BJ (cell line): ENCODE measurements at regions of chr11 and their contacts with region 1.

Region 1: GRCh38 chr11:122248131-122248530 is 132.1 kb upstream of the BLID start:
- DNase-seq: no peak
- H3K4me3 ChIP-seq: no peak overlapping the region
- H3K27me3 ChIP-seq: no peaks in the 10 kb centered on the region
- CTCF ChIP-seq: no peak

Region 2: GRCh38 chr11:122115524-122116379 is 132.4 kb before region 1 on chr11 and contains the start of gene BLID:
- CTCF ChIA-PET with region 1: no interaction called
- POLR2A ChIA-PET with region 1: no interaction called
- DNase-seq: no peak
- H3K4me3 ChIP-seq: no peak within 1 kb of the TSS
- H3K27me3 ChIP-seq: no peaks in the 10 kb centered on the region
- CTCF ChIP-seq: peak; percentile 64
- polyA plus RNA-seq, gene BLID: 0.16 and 0.37 TPM in 2 replicates

Region 3: DNA sequence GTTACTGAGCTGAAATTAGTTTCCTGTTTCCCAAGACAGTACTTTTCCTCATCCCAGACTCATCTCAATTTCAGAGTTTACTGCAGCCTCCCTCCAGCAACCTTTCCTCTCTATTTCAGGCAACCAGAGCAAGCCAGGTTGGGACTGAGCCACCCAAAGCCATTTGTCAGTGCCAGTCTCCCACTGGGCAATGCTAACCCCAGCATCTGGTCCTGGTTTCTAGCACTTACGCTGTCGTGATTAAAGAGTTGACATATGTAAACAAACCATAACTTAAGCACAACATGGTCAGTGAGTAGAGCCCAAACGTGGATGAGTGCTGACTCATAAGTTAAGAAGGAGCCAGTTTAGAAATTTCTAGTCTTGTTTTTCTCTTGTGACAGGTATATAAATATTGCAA is 12.5 kb before region 1 on chr11:
- CTCF ChIA-PET with region 1: interaction called, 13 read pairs
- POLR2A ChIA-PET with region 1: no interaction called
- DNase-seq: peak; percentile 80
- H3K4me3 ChIP-seq: no peak overlapping the region
- H3K27me3 ChIP-seq: no peaks in the 10 kb centered on the region
- CTCF ChIP-seq: no peak

Region 4: DNA sequence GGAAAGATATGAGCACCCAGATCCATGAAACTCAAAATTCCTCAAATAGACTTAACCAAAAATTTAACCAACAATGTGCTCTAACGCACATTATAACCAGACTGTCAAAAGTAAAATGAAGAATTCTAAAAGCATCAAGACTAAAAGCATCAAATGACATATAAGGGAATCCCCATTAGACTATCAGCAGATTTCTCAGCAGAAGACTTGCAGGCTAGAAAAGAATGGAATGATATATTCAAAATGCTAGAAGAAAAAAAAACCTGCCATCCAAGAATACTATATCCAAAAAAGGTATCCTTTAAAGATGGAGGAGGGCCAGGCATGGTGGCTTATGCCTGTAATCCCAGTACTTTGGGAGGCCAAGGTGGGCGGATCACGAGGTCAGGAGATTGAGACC is 289.9 kb after region 1 on chr11:
- CTCF ChIA-PET with region 1: no interaction called
- POLR2A ChIA-PET with region 1: no interaction called
- DNase-seq: no peak
- H3K4me3 ChIP-seq: no peak overlapping the region
- H3K27me3 ChIP-seq: peaks cover 4% of the 10 kb centered on the region; the same call in 1 of the 2 replicates
- CTCF ChIP-seq: no peak